Activated CD4-positive, alpha-beta T cell treated with anti-CD3 and anti-CD28 coated beads for 36 hours (primary cell): ENCODE measurements at regions of chr7 and their contacts with region 1.

Region 1: GRCh38 chr7:49174396-49174795 is 250.0 kb downstream of the CDC14C start:
- DNase-seq: no peak
- ATAC-seq: peak; percentile 19
- H3K4me3 Mint-ChIP-seq: no peak overlapping the region
- H3K27ac Mint-ChIP-seq: no peak overlapping the region
- H3K4me1 Mint-ChIP-seq: no peaks in the 10 kb centered on the region
- H3K27me3 Mint-ChIP-seq: peaks cover 1% of the 10 kb centered on the region

Region 2: GRCh38 chr7:49112222-49112621 is 62.2 kb before region 1 on chr7:
- CTCF ChIA-PET with region 1: no interaction called
- POLR2A ChIA-PET with region 1: no interaction called
- intact Hi-C with region 1: loop called in 1 of 2 experiments (anchors 10 kb)
- DNase-seq: no peak
- ATAC-seq: no peak
- H3K4me3 Mint-ChIP-seq: no peak overlapping the region
- H3K27ac Mint-ChIP-seq: no peak overlapping the region
- H3K4me1 Mint-ChIP-seq: no peaks in the 10 kb centered on the region
- H3K27me3 Mint-ChIP-seq: no peaks in the 10 kb centered on the region